Posterior vena cava (tissue), 2 donors: ENCODE measurements at regions of chr2 and their contacts with region 1.

Region 1: DNA sequence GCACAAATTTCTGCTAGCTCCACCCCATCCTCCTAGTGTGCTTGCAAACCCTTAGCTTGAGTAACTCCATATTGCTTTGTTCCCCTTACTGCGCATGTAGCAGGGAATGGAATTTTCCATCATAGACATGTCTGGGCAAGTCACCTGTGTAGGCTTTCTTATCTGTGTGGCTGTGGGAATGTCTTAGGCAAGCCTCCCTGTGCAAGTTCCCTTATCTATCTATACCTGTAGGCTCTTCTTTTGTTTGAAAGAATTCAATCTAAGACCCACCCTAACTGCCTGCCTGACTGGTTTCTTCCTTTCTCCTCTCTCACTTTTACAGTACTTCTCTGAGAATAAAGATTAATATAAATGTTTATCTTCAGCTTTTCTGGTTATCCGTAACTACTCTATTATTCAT is 217.6 kb upstream of the FIGN start:
- DNase-seq: no peak

Region 2: GRCh38 chr2:163887182-163887581 is 66.3 kb before region 1 on chr2:
- intact Hi-C with region 1: no loop called
- DNase-seq: no peak

Region 3: DNA sequence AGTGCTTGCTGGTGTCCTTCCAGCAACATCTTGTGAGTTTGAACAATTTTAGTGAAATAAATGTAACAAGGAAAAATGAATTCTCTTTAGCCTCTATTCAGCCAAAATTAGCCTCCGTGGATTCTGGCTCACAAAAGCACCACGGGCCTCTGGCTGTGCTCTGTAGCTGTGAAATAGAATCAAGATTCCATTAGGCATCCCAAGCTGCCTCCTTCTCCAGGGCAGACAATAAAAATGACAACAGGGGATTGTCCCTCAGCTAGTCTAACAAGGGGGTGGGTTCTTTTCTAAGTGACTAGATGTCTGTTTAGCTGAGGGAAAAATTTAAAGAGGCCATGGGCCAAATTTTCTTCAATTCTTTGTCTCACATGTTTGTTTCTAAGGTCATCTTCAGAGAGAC is 37.1 kb after region 1 on chr2:
- intact Hi-C with region 1: no loop called
- DNase-seq: no peak

Region 4: DNA sequence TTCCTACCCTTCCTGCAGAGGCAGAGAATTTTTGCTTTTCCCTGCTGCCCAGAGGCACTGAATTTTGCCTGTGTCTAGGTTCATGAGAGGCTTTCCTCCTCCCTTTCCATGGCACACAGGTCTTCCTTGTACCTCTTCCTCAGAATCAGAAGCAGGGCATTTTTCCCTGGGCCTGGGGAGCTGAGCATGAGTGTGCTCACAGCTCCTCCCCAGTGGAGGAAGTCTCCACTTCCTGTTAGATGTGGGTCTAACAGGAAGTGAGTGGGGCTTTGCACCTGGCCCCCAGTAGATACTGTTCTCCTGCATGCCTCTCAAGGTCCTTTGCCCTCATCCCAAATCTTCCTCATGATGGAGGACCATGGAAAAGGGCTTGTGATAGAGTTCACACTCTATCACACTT is 79.6 kb after region 1 on chr2:
- intact Hi-C with region 1: loop called in 1 of 2 experiments (anchors 2 kb)
- DNase-seq: no peak